ENCODE measurements at regions of chr5 and their contacts with region 1.

Region 1: DNA sequence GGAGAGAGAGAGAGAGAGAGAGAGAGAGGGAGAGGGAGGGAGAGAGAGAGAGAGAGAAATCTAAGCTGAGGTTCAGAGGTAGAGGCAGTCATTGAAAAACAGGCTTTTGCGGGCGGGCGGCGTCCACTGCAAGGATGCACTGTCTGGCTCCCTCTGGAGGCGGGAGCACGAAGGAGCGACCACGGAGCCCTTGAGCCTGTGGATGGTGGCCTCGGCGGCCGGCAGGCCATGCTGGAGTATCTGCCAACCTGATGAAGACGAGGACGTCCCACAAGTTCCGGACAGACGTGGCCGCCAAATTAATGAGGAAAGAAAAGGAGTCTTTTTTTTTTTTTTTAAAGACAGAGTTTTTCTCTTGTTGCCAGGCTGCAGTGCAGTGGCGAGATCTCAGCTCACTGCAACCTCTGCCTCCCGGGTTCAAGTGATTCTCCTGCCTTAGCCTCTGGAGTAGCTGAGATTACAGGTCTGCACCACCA is 2.2 kb upstream of the CCDC125 start:
- DNase-seq: peak; percentile 85

Region 2: DNA sequence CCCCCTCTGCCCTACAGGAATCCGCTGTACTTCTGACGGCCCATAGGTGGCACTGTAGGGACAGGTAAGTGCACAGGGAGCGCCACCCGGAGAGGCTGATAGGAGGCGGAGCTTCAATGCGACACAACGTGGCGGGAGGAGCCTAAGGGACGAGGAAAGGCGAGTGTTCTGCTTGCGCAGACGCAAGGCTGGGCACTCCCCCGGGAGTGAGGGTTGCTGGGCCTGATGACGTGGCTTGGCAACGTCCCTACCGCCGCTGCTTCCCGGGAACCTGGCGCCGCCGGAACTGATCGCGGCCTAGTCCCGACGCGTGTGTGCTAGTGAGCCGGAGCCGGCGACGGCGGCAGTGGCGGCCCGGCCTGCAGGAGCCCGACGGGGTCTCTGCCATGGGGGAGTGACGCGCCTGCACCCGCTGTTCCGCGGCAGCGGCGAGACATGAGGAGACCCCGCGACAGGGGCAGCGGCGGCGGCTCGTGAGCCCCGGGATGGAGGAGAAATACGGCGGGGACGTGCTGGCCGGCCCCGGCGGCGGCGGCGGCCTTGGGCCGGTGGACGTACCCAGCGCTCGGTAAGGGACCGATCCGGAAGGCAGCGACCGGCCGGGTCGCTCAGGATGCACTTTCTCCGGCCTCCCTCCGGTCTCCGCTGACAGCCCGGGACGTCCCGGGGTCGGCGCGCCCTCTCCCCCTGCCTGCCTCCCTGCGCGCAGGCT is 240.9 kb before region 1 on chr5 and contains the start of gene SLC30A5:
- in situ Hi-C with region 1: loop called (anchors 25 kb)
- DNase-seq: peak; percentile 99